ENCODE measurements at regions of chr6 and their contacts with region 1.

Region 1: DNA sequence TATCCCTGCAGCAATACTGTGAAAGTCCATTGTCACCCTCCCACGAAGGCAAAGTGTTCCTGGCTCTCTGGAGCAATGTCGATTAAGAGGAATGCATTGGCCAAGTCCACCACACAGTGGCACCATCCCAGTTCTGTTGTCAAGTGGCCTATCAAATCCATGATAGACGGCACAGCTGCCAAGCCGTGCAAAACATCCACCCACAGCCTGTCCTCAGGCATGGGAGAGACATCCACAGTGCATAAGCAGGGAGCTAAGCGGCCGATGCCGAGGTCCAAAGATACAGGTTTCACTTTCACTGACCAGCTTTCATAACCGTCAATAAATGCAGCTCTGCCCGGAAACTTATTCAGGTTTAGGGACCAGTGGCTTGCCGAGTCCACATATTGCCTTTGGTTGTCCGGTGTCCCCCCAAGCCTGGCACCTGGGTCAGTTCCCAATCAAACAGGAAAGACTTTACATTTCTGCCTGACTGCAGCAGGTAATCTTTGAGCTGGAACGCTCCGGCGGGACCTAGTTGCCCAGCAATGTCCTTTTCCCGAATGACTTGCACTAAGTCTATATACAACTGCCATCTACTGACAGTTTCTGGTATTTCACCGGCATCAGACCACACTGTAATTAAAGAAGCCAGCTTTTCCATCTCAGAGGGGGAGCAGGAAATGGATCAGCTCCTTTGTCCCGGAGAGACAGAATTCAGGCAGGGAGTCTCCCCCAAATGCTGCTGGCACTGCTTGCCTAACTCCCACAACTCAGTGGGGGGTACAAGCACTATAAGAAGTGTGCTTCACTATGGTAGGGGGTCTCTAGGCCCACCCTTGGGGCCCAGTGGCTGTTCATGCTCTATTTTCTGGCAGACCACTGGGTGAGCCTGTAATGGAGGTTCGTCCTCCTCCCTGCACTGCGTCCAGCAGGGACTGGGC is 6.3 kb downstream of the ZKSCAN3 start:
- DNase-seq: peak; percentile 55
- ATAC-seq: peak; percentile 93
- H3K4me3 ChIP-seq: peak overlapping the region; percentile 67; the same call in 1 of the 2 replicates
- H3K27ac ChIP-seq: peak overlapping the region; percentile 59
- H3K4me1 ChIP-seq: peaks cover 3% of the 10 kb centered on the region; the same call in 1 of the 2 replicates
- H3K27me3 ChIP-seq: no peaks in the 10 kb centered on the region
- CTCF ChIP-seq: peak; percentile 71 to 76 (median 72)
- EP300 ChIP-seq: no peak
- POLR2A ChIP-seq: no peak
- RAD21 ChIP-seq: peak; percentile 88

Region 2: DNA sequence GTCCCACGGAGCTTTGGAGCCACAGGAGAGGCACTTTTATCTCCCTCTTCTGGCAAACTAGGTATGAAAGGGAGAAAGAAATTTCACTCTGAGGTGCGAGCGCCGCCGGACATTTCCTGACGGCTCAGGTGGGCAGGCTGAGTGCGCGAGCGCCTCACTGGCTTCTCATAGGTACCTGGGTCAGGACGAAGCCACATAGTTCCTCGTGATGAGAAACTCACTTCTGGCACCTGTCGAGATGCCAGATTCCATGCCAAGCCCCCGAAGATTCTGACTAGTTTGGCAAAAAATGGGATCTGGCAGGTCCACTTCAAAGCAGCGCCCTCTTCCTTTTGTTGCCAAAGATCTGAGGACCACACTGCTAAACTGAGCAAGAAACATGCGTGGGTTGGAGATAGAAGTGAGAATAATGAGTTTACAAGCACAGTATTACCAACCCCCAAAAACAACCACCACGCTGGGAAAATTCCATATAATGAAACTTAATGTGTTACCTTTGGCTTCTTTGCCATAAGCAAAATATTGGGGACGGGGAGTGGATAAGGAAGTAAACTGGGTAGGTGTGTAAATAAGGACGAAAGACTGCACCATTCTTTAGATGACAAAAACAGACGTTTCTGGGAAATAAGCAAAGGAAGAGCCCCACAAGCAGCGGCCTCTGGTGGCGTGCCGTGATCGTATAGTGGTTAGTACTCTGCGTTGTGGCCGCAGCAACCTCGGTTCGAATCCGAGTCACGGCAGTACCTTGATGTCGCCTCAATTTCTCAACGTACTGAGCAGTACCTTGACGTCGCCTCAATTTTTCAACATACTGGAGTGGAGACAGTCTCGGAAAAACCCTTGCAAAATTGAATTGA is 1198.3 kb before region 1 on chr6:
- CTCF ChIA-PET with region 1: no interaction called
- POLR2A ChIA-PET with region 1: no interaction called
- RAD21 ChIA-PET with region 1: no interaction called
- SMC1A ChIA-PET with region 1: no interaction called
- in situ Hi-C with region 1: loop called (anchors 25 kb)
- intact Hi-C with region 1: loop called (anchors 10 kb)
- DNase-seq: peak; percentile 66
- ATAC-seq: peak; percentile 83
- H3K4me3 ChIP-seq: peak overlapping the region; percentile 70
- H3K27ac ChIP-seq: peak overlapping the region; percentile 45
- H3K4me1 ChIP-seq: peaks cover 8% of the 10 kb centered on the region
- H3K27me3 ChIP-seq: no peaks in the 10 kb centered on the region
- CTCF ChIP-seq: peak in 2 of 3 experiments; percentile 56 to 63; a peak in 5 of 6 replicates
- EP300 ChIP-seq: peak in 1 of 2 experiments; percentile 74; a peak in 1 of 4 replicates
- POLR2A ChIP-seq: no peak
- RAD21 ChIP-seq: peak; percentile 43

Region 3: GRCh38 chr6:28124102-28124970 is 231.7 kb before region 1 on chr6 and contains the start of gene ZSCAN16:
- CTCF ChIA-PET with region 1: interaction called, 10 read pairs
- POLR2A ChIA-PET with region 1: no interaction called
- RAD21 ChIA-PET with region 1: interaction called, 10 read pairs
- SMC1A ChIA-PET with region 1: interaction called, 4 read pairs
- in situ Hi-C with region 1: no loop called
- intact Hi-C with region 1: no loop called
- DNase-seq: no peak
- ATAC-seq: peak; percentile 100
- H3K4me3 ChIP-seq: peak within 1 kb of the TSS; percentile 76
- H3K27ac ChIP-seq: peak within 1 kb of the TSS; percentile 59
- H3K4me1 ChIP-seq: peaks cover 8% of the 10 kb centered on the region
- H3K27me3 ChIP-seq: no peaks in the 10 kb centered on the region
- CTCF ChIP-seq: no peak
- EP300 ChIP-seq: no peak
- POLR2A ChIP-seq: peak; percentile 87
- RAD21 ChIP-seq: no peak
- polyA plus RNA-seq, gene ZSCAN16: 10.5 to 13.8 TPM

Region 4: GRCh38 chr6:28218271-28219248 is 137.4 kb before region 1 on chr6:
- CTCF ChIA-PET with region 1: interaction called, 8 read pairs
- POLR2A ChIA-PET with region 1: interaction called, 3 read pairs
- RAD21 ChIA-PET with region 1: interaction called, 9 read pairs
- SMC1A ChIA-PET with region 1: interaction called, 12 read pairs
- in situ Hi-C with region 1: no loop called
- intact Hi-C with region 1: loop called (anchors 5 kb)
- DNase-seq: no peak
- ATAC-seq: peak; percentile 97
- H3K4me3 ChIP-seq: peak overlapping the region; percentile 83
- H3K27ac ChIP-seq: no peak overlapping the region
- H3K4me1 ChIP-seq: peaks cover 3% of the 10 kb centered on the region; the same call in 1 of the 2 replicates
- H3K27me3 ChIP-seq: no peaks in the 10 kb centered on the region; a peak in 1 of 4 replicates
- CTCF ChIP-seq: no peak
- EP300 ChIP-seq: no peak
- POLR2A ChIP-seq: peak; percentile 67
- RAD21 ChIP-seq: no peak

Region 5: GRCh38 chr6:28281288-28282064 is 74.5 kb before region 1 on chr6 and contains the start of gene PGBD1:
- CTCF ChIA-PET with region 1: interaction called, 3 read pairs
- POLR2A ChIA-PET with region 1: no interaction called
- RAD21 ChIA-PET with region 1: interaction called, 14 read pairs
- SMC1A ChIA-PET with region 1: interaction called, 7 read pairs
- in situ Hi-C with region 1: no loop called
- intact Hi-C with region 1: no loop called
- DNase-seq: no peak
- ATAC-seq: peak; percentile 97
- H3K4me3 ChIP-seq: peak within 1 kb of the TSS; percentile 71
- H3K27ac ChIP-seq: no peak within 1 kb of the TSS; the same call in 1 of the 2 replicates
- H3K4me1 ChIP-seq: no peaks in the 10 kb centered on the region
- H3K27me3 ChIP-seq: no peaks in the 10 kb centered on the region
- CTCF ChIP-seq: no peak
- EP300 ChIP-seq: no peak
- POLR2A ChIP-seq: peak; percentile 72
- RAD21 ChIP-seq: 0 out of 2 replicates have a peak, but pooled peaks have one; percentile 2
- polyA plus RNA-seq, gene PGBD1: 2.0 to 2.2 TPM

Region 6: DNA sequence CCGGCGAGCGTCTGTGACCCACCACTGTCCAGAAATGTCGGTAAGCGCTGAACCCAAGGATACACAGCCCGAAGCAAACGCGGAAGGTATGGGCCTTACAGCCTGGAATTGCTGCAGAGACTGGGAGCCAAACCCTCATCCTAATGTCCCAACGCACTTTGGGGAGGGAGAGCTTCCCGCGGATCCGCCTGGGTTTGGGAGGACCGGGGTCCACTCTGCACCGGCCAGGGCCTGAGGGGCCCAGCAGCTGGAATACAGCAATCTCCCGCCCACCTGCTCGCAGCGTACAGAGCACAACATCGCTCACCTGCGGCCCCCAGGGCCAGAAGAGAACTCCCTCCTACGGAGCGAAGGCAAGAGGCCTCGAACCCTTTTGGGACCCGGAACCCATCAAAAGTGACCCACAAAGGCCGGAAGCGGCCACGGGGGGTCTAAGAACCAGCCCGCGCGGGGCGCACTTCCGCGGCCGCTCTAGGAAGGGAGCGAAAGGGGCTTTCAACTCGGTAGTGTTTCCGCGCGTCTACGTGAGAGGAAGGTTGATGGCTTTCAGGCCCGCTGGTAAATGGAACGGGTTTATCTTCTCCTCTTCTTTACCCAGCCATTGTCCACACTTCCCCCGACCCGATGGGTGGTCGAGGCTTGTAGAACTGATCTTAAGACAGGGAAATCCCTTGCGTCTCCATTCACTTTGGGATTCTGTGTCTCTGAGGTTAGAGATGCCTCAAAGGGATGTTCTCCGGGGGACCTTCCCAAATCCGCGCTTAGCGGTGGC is 43.5 kb after region 1 on chr6 and contains the start of gene ZSCAN12:
- CTCF ChIA-PET with region 1: interaction called, 17 read pairs
- POLR2A ChIA-PET with region 1: no interaction called
- RAD21 ChIA-PET with region 1: interaction called, 3 read pairs
- SMC1A ChIA-PET with region 1: no interaction called
- in situ Hi-C with region 1: no loop called
- intact Hi-C with region 1: no loop called
- DNase-seq: peak; percentile 61
- ATAC-seq: peak; percentile 86
- H3K4me3 ChIP-seq: peak within 1 kb of the TSS; percentile 80
- H3K27ac ChIP-seq: peak within 1 kb of the TSS; percentile 97
- H3K4me1 ChIP-seq: peaks cover 4% of the 10 kb centered on the region
- H3K27me3 ChIP-seq: no peaks in the 10 kb centered on the region
- CTCF ChIP-seq: peak; percentile 50 to 59 (median 54)
- EP300 ChIP-seq: peak in 1 of 2 experiments; percentile 39; a peak in 1 of 4 replicates
- POLR2A ChIP-seq: peak; percentile 87
- RAD21 ChIP-seq: peak; percentile 25; the same call in 1 of the 2 replicates
- polyA plus RNA-seq, gene ZSCAN12: 1.2 to 1.6 TPM

Region 7: GRCh38 chr6:28449056-28449455 is 93.1 kb after region 1 on chr6:
- CTCF ChIA-PET with region 1: no interaction called
- POLR2A ChIA-PET with region 1: no interaction called
- RAD21 ChIA-PET with region 1: no interaction called
- SMC1A ChIA-PET with region 1: no interaction called
- in situ Hi-C with region 1: no loop called
- intact Hi-C with region 1: no loop called
- DNase-seq: no peak
- ATAC-seq: no peak
- H3K4me3 ChIP-seq: no peak overlapping the region
- H3K27ac ChIP-seq: no peak overlapping the region
- H3K4me1 ChIP-seq: no peaks in the 10 kb centered on the region
- H3K27me3 ChIP-seq: peaks cover 0 to 2% of the 10 kb centered on the region in 2 experiments; a peak in 1 of 4 replicates
- CTCF ChIP-seq: no peak
- EP300 ChIP-seq: no peak
- POLR2A ChIP-seq: no peak
- RAD21 ChIP-seq: no peak